OCI-LY7 (cell line): ENCODE measurements at regions of chr12 and their contacts with region 1.

Region 1: DNA sequence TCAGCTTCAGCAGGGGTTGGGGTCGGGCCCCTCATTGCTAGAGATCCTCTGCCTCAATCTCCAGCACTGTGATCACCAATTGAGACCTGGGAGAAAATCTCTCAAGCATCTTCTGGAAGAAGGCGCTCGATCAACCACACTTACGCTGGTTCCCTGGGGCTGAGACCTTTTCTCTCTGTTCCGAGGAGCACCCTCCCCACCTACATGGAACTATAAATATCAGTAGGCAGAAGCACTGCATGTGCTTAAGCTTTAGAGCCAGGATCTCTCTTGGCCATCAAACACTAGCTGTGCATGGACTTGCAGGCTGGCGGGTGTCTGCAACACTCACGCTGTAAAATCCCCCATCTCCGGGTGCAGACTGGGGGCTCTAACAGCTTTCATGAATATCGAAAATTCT is 38.2 kb upstream of the KCNA1 start:
- DNase-seq: no peak
- H3K4me3 ChIP-seq: no peak overlapping the region
- H3K27ac ChIP-seq: no peak overlapping the region
- H3K4me1 ChIP-seq: no peaks in the 10 kb centered on the region
- CTCF ChIP-seq: no peak

Region 2: DNA sequence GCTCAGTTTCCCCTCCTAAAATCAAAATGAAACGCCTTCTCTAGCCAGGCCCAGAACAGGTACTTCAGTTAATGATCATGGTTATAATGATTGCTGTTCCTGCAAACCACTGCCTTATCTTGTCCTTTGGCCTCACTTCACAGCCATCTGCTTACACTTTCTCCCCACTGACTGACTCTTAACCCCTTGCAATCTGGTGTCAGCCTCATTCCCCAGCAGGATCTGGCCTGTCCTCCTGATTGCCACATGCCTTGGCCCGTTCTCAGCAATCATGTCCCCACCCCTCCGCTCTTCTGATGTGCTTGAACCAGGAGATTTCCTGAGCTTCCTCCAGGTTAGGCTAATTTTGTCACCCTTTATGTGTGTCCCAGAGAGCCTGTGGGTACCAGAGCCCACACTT is 102.7 kb after region 1 on chr12:
- CTCF ChIA-PET with region 1: interaction called, 10 read pairs
- POLR2A ChIA-PET with region 1: no interaction called
- intact Hi-C with region 1: no loop called
- DNase-seq: no peak
- H3K4me3 ChIP-seq: no peak overlapping the region
- H3K27ac ChIP-seq: no peak overlapping the region
- H3K4me1 ChIP-seq: no peaks in the 10 kb centered on the region
- CTCF ChIP-seq: no peak